GM10248 (cell line): ENCODE measurements at regions of chr14 and their contacts with region 1.

Region 1: DNA sequence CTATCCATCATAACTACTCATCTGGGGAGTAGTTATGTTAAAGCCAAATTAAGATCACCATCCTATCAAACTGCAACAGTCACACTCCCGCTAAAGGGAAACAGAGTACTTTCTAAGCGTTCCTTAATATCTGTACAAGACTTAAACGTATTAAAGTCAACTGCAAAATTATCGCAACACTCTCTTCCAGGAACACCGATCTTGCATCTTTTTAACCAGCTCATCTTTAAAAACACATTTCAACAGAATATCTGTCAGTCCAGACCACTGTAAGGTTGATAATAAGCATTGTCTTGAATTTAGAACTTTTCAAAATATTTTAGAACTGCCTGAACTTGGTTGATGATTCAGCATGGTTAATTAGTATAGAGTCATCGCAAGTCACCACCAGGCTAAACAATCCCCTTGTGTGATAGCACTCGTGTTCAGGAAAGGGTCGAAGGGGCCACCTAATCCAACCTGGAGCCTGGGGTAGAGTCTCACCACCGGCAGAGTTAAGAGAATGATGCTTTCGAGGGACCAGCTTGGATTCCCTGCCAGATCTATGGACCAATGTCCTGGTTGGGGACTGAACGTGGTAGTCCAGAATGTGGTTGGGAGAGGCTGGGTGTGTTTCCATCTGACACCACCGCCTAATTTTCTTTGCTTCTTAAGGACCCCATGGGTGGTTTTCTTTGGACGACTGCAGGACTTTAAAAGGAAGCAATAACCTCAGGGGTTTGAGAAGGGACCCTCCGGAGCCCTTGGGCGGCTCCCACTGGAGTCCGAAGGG is 890 bp downstream of the SPTLC2 start:
- DNase-seq: no peak
- CTCF ChIP-seq: no peak

Region 2: GRCh38 chr14:77326167-77326566 is 289.4 kb before region 1 on chr14:
- CTCF ChIA-PET with region 1: no interaction called
- POLR2A ChIA-PET with region 1: no interaction called
- DNase-seq: no peak
- CTCF ChIP-seq: no peak

Region 3: DNA sequence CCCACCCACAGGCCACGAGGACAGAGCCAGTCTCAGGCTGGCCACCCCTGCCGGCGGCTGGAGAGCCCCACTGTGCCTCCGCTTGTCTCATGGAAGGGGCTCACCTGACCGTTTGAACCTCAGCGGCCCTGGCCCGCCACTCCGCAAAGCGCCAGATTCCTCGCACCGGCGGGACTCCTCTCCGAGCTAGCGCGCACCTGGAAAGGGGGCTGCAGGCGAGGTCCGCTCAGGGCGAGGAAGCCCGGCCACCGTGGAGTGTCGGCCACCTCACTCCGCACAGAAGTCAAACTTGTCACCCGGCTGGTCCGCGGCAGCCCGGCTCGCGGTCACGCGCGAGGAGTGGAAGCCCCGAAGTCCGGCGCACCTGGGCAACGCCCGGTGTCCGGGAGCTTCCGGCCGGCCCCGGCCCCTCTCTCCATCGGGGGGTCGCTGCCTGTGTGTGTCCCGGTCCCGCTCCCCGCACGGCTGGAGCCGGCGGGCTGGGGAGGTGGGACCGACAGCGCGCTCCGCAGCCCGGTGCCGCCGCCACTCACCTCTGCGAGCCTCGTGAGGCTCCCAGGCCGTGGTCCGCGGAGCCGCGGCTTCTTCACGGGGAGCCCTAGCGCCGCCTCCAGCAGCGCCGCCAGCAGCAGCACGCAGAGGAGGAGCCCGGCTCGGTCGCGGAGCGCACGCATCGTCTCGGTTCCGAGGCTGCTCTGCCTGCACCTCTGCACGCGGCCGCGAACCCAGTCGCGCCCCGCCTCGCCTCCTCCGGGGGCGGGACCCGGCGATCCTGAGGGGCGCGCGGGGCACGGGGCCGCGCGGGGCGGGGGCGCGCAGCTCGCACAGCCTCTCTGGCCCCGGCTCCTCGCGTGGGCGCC is 117.2 kb before region 1 on chr14 and contains the start of gene ISM2:
- CTCF ChIA-PET with region 1: no interaction called
- POLR2A ChIA-PET with region 1: no interaction called
- DNase-seq: peak; percentile 76
- CTCF ChIP-seq: peak; percentile 2

Region 4: DNA sequence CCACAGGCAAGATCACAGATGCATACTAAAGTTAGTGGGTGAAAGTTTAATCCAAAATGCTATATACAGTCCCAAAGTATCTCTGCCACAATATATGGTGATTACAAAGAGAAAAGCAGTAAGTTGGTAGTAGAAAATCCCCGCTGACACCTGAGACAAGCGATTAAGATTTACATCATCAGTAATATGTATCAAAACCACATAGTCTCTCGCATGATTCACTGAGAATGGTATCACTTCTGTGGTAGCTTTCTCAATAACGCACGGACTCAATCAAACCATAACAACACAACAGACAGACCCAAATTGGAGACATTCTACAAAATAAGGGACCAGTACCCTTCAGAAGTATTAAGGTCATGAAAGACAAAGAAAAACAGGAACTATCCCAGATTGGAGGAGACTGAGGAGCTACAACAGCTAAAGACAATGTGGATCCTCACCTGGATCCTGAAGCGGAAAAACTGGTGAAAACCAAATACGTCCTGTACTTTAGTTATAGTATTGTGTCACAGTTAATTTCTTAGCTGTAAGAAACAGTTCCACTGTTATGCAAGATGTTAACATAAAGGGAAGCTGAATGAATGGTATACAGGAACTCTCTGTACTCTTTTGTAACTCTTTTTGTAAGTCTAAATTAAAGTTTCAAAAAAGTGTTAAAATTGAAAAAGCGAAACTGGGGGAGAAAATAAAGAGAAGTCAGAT is 50.1 kb before region 1 on chr14:
- CTCF ChIA-PET with region 1: no interaction called
- POLR2A ChIA-PET with region 1: no interaction called
- DNase-seq: peak; percentile 30
- CTCF ChIP-seq: no peak

Region 5: GRCh38 chr14:77603654-77604255 is 11.8 kb before region 1 on chr14:
- CTCF ChIA-PET with region 1: interaction called, 18 read pairs
- POLR2A ChIA-PET with region 1: no interaction called
- DNase-seq: no peak
- CTCF ChIP-seq: no peak